ENCODE measurements at regions of chr15 and their contacts with region 1.

Region 1: DNA sequence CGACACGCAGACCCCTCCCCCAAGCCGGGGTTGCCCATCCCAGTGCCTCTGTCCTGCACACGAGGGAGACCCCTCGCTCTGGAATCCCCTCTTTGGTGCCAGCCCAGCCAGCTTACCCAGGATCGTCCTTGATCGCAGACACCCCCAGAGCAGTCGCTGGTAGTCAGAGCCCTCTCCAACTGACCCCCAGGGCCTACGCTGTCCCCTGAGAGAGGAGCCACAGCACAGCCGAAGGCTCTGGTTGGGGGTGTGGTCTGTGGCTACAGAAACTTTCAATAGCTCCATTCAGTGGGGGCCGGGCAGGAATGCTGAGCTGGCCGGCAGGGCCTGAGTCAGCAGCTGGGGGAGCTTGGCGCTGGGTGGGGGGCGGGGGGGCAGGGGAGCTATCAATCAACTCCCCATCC is at the start of gene LCTL:
- DNase-seq: no peak
- H3K4me3 ChIP-seq: no peak within 1 kb of the TSS
- H3K27ac ChIP-seq: no peak within 1 kb of the TSS
- H3K4me1 ChIP-seq: no peaks in the 10 kb centered on the region
- H3K27me3 ChIP-seq: no peaks in the 10 kb centered on the region
- CTCF ChIP-seq: no peak
- total RNA-seq, gene LCTL: not detected in 2 replicates

Region 2: GRCh38 chr15:66400351-66400774 is 165.4 kb before region 1 on chr15:
- CTCF ChIA-PET with region 1: no interaction called
- POLR2A ChIA-PET with region 1: no interaction called
- intact Hi-C with region 1: no loop called
- DNase-seq: no peak
- H3K4me3 ChIP-seq: no peak overlapping the region
- H3K27ac ChIP-seq: no peak overlapping the region
- H3K4me1 ChIP-seq: peaks cover 22% of the 10 kb centered on the region
- H3K27me3 ChIP-seq: no peaks in the 10 kb centered on the region
- CTCF ChIP-seq: no peak

Region 3: GRCh38 chr15:66907826-66908743 is 342.3 kb after region 1 on chr15:
- CTCF ChIA-PET with region 1: interaction called, 14 read pairs
- POLR2A ChIA-PET with region 1: no interaction called
- intact Hi-C with region 1: no loop called
- DNase-seq: no peak
- H3K4me3 ChIP-seq: no peak overlapping the region
- H3K27ac ChIP-seq: peak overlapping the region; percentile 34
- H3K4me1 ChIP-seq: peaks cover 22% of the 10 kb centered on the region
- H3K27me3 ChIP-seq: no peaks in the 10 kb centered on the region
- CTCF ChIP-seq: no peak